ENCODE measurements at regions of chr12 and their contacts with region 1.

Region 1: GRCh38 chr12:52969828-52970569 is 21.1 kb downstream of the KRT18 start:
- DNase-seq: no peak
- H3K4me3 ChIP-seq: no peak overlapping the region
- H3K27ac ChIP-seq: no peak overlapping the region
- H3K4me1 ChIP-seq: peaks cover 0 to 16% (median 9%) of the 10 kb centered on the region in 4 donors
- H3K27me3 ChIP-seq: peaks cover 0 to 16% of the 10 kb centered on the region in 2 donors
- CTCF ChIP-seq: no peak

Region 2: GRCh38 chr12:52598966-52599365 is 371.0 kb before region 1 on chr12:
- intact Hi-C with region 1: loop called (anchors 10 kb)
- DNase-seq: no peak
- H3K4me3 ChIP-seq: no peak overlapping the region
- H3K27ac ChIP-seq: no peak overlapping the region
- H3K4me1 ChIP-seq: no peaks in the 10 kb centered on the region
- H3K27me3 ChIP-seq: peaks cover 0 to 37% of the 10 kb centered on the region in 2 donors
- CTCF ChIP-seq: no peak

Region 3: GRCh38 chr12:52740581-52740980 is 229.4 kb before region 1 on chr12:
- intact Hi-C with region 1: no loop called
- DNase-seq: no peak
- H3K4me3 ChIP-seq: no peak overlapping the region
- H3K27ac ChIP-seq: no peak overlapping the region
- H3K4me1 ChIP-seq: no peaks in the 10 kb centered on the region
- H3K27me3 ChIP-seq: peaks cover 0 to 26% of the 10 kb centered on the region in 2 donors
- CTCF ChIP-seq: no peak

Region 4: DNA sequence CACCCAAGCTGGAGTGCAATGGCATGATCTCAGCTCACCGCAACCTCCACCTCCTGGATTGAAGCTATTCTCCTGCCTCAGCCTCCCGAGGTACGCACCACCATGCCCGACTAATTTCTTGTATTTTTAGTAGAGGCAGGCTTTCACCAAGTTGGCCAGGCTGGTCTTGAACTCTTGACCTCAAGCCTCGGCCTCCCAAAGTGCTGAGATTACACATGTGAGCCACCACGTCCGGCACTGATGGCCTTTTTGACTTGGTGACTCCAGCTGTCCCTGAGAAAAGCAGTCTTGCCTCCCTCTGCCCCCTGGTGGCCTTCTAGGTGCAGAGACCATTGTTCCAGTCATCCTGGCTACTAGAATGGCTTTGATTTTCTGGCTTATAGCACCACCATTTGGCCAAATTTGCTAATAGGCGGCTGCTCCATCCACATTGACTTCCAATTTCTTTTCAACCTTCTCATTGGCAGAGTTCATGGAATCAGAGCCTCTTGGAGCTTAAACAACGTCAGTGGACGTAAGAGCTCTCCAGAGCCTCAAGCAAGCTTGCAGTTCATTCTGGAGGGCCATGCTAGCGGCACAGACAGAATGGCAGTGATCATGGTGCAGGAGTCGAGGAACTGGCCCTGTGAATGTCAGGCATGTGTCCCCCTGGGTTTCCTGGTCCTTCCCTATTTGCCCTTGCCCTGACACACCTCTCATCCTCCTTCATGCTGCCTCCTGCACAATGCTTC is 10.9 kb after region 1 on chr12:
- intact Hi-C with region 1: no loop called
- DNase-seq: peak; percentile 89 to 90
- H3K4me3 ChIP-seq: no peak overlapping the region
- H3K27ac ChIP-seq: no peak overlapping the region
- H3K4me1 ChIP-seq: peaks cover 0 to under 1% (median 0%) of the 10 kb centered on the region in 4 donors
- H3K27me3 ChIP-seq: peaks cover 0 to 3% of the 10 kb centered on the region in 2 donors
- CTCF ChIP-seq: peak; percentile 89 to 99

Measured in tibial artery (tissue), 4 donors.